Caco-2 (cell line): ENCODE measurements at regions of chr4 and their contacts with region 1.

Region 1: GRCh38 chr4:102620697-102621497 is 119.7 kb downstream of the NFKB1 start:
- DNase-seq: peak; percentile 74 to 81
- H3K4me3 ChIP-seq: peak overlapping the region; percentile 30
- H3K4me3 Mint-ChIP-seq: peak overlapping the region; percentile 73
- H3K27ac Mint-ChIP-seq: peak overlapping the region; percentile 87
- H3K4me1 ChIP-seq: peaks cover 28% of the 10 kb centered on the region
- H3K4me1 Mint-ChIP-seq: peaks cover 39% of the 10 kb centered on the region
- H3K27me3 ChIP-seq: no peaks in the 10 kb centered on the region
- H3K27me3 Mint-ChIP-seq: no peaks in the 10 kb centered on the region
- CTCF ChIP-seq: peak; percentile 60

Region 2: DNA sequence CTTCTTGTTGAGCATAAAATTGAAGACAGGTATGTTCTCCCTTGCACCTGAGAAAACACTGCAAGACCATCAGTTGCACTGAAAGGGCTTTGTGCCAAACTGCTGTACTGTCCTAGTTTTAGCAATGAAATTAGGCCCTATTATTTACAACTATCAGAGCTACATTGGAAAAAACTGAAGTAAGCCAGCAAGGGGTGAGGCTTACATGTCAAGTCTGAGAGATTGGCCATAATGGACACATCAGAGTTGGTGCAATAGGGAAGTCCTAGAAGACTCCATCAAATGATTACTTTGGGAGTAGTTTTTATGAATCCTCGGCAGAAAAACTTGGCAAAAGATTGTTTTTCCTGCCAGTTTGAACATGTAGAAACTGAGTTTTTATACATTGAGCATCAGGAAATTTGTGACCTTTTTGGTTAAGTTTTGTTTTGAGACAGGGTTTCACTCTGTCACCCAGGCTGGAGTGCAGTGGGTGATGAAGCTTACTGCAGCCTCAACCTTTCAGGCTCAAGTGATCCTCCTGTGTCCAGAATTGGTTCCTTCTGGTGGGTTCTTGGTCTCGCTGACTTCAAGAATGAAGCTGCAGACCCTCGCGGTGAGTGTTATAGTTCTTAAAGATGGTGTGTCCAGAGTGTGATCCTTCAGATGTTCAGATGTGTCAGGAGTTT is 990.4 kb before region 1 on chr4:
- CTCF ChIA-PET with region 1: no interaction called
- POLR2A ChIA-PET with region 1: no interaction called
- intact Hi-C with region 1: no loop called
- DNase-seq: no peak
- H3K4me3 ChIP-seq: no peak overlapping the region
- H3K4me3 Mint-ChIP-seq: no peak overlapping the region
- H3K27ac Mint-ChIP-seq: no peak overlapping the region
- H3K4me1 ChIP-seq: no peaks in the 10 kb centered on the region
- H3K4me1 Mint-ChIP-seq: no peaks in the 10 kb centered on the region
- H3K27me3 ChIP-seq: no peaks in the 10 kb centered on the region
- H3K27me3 Mint-ChIP-seq: peaks cover 6% of the 10 kb centered on the region
- CTCF ChIP-seq: no peak

Region 3: DNA sequence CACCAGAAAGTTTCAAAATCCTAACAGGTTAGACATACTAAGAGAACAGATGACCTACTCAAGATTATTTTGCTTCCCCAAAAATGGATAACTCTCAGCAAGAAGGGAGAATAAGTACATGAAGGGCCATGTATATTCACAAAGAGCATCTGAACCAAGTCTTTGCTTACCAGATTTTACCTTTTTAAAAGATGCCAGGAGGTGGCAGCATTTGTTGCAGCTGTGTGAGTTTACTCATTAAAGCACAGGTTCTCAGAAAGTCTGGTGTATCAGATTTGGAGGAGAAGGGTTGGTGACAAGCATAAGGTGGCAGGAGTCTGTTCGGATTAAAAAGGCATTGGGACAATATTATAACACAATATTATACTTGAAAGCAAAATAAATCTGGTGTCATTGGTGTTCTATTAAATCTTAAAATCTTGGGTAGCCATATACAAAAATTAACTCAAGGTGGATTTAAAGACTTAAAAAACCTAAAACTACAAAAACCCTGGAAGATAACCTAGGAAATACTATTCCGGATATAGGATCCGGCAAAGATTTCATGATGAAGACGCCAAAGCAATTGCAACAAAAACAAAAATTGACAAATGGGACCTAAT is 171.0 kb before region 1 on chr4:
- CTCF ChIA-PET with region 1: no interaction called
- POLR2A ChIA-PET with region 1: no interaction called
- intact Hi-C with region 1: loop called (anchors 1 kb)
- DNase-seq: peak; percentile 43 to 64
- H3K4me3 ChIP-seq: no peak overlapping the region
- H3K4me3 Mint-ChIP-seq: no peak overlapping the region
- H3K27ac Mint-ChIP-seq: no peak overlapping the region
- H3K4me1 ChIP-seq: no peaks in the 10 kb centered on the region
- H3K4me1 Mint-ChIP-seq: no peaks in the 10 kb centered on the region
- H3K27me3 ChIP-seq: no peaks in the 10 kb centered on the region
- H3K27me3 Mint-ChIP-seq: no peaks in the 10 kb centered on the region
- CTCF ChIP-seq: peak; percentile 59 to 66

Region 4: DNA sequence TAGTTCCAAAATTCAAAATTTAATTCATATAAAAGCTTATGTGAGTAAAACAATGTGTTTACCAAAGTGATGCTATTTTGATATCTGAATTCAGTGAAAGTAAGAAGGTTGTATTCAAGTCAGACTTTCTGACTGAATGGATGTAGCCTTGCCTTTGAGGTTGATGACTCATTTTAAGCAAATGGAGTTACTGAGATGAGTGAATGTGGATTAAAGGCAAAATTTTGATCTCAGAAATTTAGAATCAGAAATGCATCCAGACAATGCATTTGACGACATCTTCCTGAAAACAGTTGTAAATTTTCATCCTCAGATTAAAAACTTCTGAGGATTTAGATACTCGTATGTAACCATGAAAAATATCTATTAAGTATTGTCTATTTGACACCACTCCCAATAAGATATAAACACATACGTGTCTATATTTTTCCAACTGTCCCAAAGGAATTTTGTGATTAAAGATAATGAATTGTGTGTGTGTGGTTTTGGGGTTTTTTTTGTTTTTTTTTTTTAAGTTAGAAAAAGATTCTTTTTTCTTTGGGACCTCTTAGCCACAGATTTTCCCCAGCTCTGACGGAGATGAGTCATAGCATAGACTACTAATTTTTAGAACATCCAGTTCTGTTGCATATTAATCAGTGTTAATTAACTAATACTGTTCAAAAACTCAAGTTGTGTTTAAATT is 85.4 kb before region 1 on chr4:
- CTCF ChIA-PET with region 1: no interaction called
- POLR2A ChIA-PET with region 1: no interaction called
- intact Hi-C with region 1: no loop called
- DNase-seq: no peak
- H3K4me3 ChIP-seq: no peak overlapping the region
- H3K4me3 Mint-ChIP-seq: no peak overlapping the region
- H3K27ac Mint-ChIP-seq: no peak overlapping the region
- H3K4me1 ChIP-seq: no peaks in the 10 kb centered on the region; the same call in 1 of the 2 replicates
- H3K4me1 Mint-ChIP-seq: peaks cover 3% of the 10 kb centered on the region
- H3K27me3 ChIP-seq: no peaks in the 10 kb centered on the region
- H3K27me3 Mint-ChIP-seq: no peaks in the 10 kb centered on the region
- CTCF ChIP-seq: no peak

Region 5: GRCh38 chr4:102760645-102761295 is 139.9 kb after region 1 on chr4 and contains the start of gene MANBA:
- CTCF ChIA-PET with region 1: interaction called, 6 read pairs
- POLR2A ChIA-PET with region 1: interaction called, 3 read pairs
- intact Hi-C with region 1: loop called (anchors 1 kb)
- DNase-seq: peak; percentile 82
- H3K4me3 ChIP-seq: peak within 1 kb of the TSS; percentile 83
- H3K4me3 Mint-ChIP-seq: peak within 1 kb of the TSS; percentile 80
- H3K27ac Mint-ChIP-seq: peak within 1 kb of the TSS; percentile 76
- H3K4me1 ChIP-seq: peaks cover 7% of the 10 kb centered on the region
- H3K4me1 Mint-ChIP-seq: peaks cover 19% of the 10 kb centered on the region
- H3K27me3 ChIP-seq: no peaks in the 10 kb centered on the region
- H3K27me3 Mint-ChIP-seq: no peaks in the 10 kb centered on the region
- CTCF ChIP-seq: no peak
- total RNA-seq, gene MANBA: 52.1 and 53.5 TPM in 2 replicates

Region 6: DNA sequence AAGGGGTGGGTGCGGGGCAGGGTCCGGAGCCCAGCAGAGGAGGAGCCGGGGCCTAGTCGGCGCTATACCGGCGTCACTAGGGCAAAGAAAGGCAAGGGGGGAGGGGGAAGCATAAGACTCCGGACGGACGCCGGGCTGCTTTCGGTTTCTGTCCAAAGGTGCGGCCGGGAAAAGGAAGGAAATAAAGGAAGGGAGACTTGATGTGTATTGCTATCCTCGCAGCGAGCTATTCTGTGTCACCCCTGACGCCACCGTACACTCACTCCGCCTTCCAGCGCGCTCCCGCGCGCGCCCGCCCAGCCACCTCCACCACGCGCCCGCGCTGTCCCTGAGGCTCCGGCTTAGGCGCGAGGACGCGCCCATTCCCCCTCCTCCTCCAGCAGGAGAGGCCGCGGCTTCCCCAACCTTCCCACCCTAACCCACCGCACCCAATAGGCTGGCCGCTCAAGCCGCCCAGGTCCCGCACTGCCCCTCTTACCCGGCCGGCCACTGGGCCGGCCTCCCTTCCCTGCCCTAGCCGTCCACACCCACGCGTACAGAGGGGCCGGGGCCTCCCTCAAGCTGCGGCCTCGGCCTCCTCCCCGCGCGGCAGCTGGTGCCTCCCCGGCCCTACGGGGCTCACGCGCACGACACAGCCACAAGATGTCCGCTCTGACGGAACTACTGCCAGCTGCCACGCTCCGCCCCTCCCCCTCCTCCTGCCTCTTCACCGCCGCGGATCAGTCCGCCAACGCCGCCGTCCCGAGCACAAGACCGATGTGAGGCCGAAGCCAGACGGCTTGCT is 206.2 kb after region 1 on chr4 and contains the start of gene UBE2D3:
- CTCF ChIA-PET with region 1: interaction called, 15 read pairs
- POLR2A ChIA-PET with region 1: interaction called, 14 read pairs
- intact Hi-C with region 1: loop called (anchors 1 kb)
- DNase-seq: peak; percentile 94
- H3K4me3 ChIP-seq: peak within 1 kb of the TSS; percentile 92
- H3K4me3 Mint-ChIP-seq: no peak within 1 kb of the TSS
- H3K27ac Mint-ChIP-seq: no peak within 1 kb of the TSS
- H3K4me1 ChIP-seq: peaks cover 25% of the 10 kb centered on the region
- H3K4me1 Mint-ChIP-seq: peaks cover 5% of the 10 kb centered on the region
- H3K27me3 ChIP-seq: no peaks in the 10 kb centered on the region
- H3K27me3 Mint-ChIP-seq: no peaks in the 10 kb centered on the region
- CTCF ChIP-seq: no peak
- total RNA-seq, gene UBE2D3: 294 and 305 TPM in 2 replicates

Region 7: DNA sequence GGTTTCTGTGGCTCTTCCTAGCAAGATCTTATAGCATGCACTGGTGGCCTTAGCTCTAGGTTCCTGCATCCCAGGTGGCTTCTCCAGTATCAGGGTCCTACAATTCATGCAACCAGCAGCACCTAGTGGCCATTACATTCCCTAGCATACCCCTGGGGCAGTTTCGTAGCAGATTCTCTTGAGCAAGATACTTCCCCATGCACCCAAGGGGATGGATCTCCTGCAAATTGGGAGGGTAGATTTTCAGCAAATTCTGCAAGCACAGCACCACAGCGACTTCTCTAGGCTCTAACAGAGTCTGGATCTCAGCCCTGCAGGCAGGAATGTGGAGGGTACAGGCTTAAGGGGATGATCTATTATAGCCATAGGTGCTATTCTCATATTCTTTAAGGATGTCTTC is 411.7 kb after region 1 on chr4:
- CTCF ChIA-PET with region 1: interaction called, 8 read pairs
- POLR2A ChIA-PET with region 1: no interaction called
- intact Hi-C with region 1: loop called (anchors 1 kb)
- DNase-seq: peak; percentile 59 to 64
- H3K4me3 ChIP-seq: no peak overlapping the region
- H3K4me3 Mint-ChIP-seq: no peak overlapping the region
- H3K27ac Mint-ChIP-seq: no peak overlapping the region
- H3K4me1 ChIP-seq: no peaks in the 10 kb centered on the region
- H3K4me1 Mint-ChIP-seq: no peaks in the 10 kb centered on the region
- H3K27me3 ChIP-seq: no peaks in the 10 kb centered on the region
- H3K27me3 Mint-ChIP-seq: no peaks in the 10 kb centered on the region
- CTCF ChIP-seq: peak; percentile 47 to 69